HepG2 (cell line): ENCODE measurements at regions of chr3 and their contacts with region 1.

Region 1: DNA sequence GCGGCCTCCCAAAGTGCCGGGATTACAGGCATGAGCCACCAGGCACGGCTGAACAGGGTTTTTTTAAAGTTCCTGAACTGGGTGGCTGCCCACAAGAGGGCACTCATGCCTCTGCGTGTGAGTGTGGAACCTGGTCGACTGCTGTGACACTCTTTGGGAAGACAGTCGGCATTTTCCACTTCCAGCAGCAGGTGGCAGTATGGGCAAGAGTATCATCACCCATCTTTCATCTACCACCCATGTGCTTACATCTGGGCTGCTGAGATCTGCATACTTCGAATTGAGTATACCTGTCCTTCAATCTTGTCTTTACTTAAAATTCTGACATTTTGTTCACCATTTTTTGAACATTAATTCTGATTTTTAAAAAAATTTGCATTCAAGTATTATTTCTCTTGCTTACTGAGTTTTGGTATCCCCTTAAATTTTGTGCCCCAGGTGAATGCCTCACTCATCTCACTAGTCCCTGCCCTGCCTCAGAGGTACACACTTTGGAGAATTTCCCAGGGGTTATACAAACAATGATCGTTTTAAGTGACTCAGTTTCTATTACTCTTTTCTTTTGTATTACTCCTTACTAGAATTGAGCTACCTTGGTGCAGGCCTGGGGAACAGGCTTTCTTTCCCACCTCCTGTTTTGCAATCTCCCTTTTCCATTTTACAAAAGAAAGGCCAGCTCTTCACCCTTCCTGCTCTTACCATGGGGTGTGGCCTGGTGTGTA is 11.8 kb downstream of the CLEC3B start:
- DNase-seq: peak; percentile 91
- ATAC-seq: peak; percentile 96
- H3K4me3 ChIP-seq: no peak overlapping the region
- H3K27ac ChIP-seq: no peak overlapping the region
- H3K4me1 ChIP-seq: no peaks in the 10 kb centered on the region
- H3K27me3 ChIP-seq: peaks cover 0 to 24% of the 10 kb centered on the region in 2 experiments; a peak in 3 of 5 replicates
- CTCF ChIP-seq: peak; percentile 96
- EP300 ChIP-seq: no peak
- POLR2A ChIP-seq: no peak
- RAD21 ChIP-seq: peak; percentile 87

Region 2: GRCh38 chr3:45210308-45211041 is 172.6 kb after region 1 on chr3:
- CTCF ChIA-PET with region 1: interaction called, 42 read pairs
- POLR2A ChIA-PET with region 1: interaction called, 4 read pairs
- in situ Hi-C with region 1: loop called (anchors 5 kb)
- intact Hi-C with region 1: loop called (anchors 1 kb)
- DNase-seq: peak; percentile 41
- ATAC-seq: peak; percentile 99
- H3K4me3 ChIP-seq: peak overlapping the region in 1 of 3 experiments; percentile 26; a peak in 1 of 6 replicates
- H3K27ac ChIP-seq: no peak overlapping the region
- H3K4me1 ChIP-seq: no peaks in the 10 kb centered on the region
- H3K27me3 ChIP-seq: peaks cover 0 to 11% of the 10 kb centered on the region in 2 experiments; a peak in 2 of 5 replicates
- CTCF ChIP-seq: peak; percentile 96
- EP300 ChIP-seq: no peak
- POLR2A ChIP-seq: no peak
- RAD21 ChIP-seq: peak; percentile 94

Region 3: GRCh38 chr3:45333549-45333948 is 295.7 kb after region 1 on chr3:
- CTCF ChIA-PET with region 1: no interaction called
- POLR2A ChIA-PET with region 1: no interaction called
- in situ Hi-C with region 1: no loop called
- intact Hi-C with region 1: no loop called
- DNase-seq: no peak
- ATAC-seq: no peak
- H3K4me3 ChIP-seq: no peak overlapping the region
- H3K27ac ChIP-seq: no peak overlapping the region
- H3K4me1 ChIP-seq: no peaks in the 10 kb centered on the region
- H3K27me3 ChIP-seq: peaks cover 0 to 46% of the 10 kb centered on the region in 2 experiments; a peak in 4 of 5 replicates
- CTCF ChIP-seq: no peak
- EP300 ChIP-seq: no peak
- POLR2A ChIP-seq: no peak
- RAD21 ChIP-seq: no peak

Region 4: DNA sequence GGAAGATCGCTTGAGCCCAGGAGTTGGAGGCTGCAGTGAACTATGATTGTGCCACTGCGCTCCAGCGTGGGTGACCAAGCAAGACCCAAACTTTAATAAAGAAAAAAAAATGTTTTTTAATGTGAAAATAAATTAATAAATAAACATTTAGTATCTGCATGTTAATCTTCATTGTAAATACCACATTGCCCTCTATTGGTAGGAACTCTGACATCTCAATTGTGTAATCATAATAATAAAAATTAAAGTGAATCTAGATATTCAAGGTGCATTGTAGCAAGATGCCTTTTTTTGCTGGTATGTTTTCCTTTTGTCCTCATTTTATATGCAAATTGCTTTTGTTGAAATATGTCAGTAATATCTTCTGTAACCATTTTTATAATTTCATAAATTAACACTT is 461.6 kb after region 1 on chr3:
- CTCF ChIA-PET with region 1: no interaction called
- POLR2A ChIA-PET with region 1: no interaction called
- in situ Hi-C with region 1: loop called (anchors 25 kb)
- intact Hi-C with region 1: no loop called
- DNase-seq: peak; percentile 12
- ATAC-seq: no peak
- H3K4me3 ChIP-seq: no peak overlapping the region
- H3K27ac ChIP-seq: no peak overlapping the region
- H3K4me1 ChIP-seq: no peaks in the 10 kb centered on the region
- H3K27me3 ChIP-seq: no peaks in the 10 kb centered on the region
- CTCF ChIP-seq: no peak
- EP300 ChIP-seq: no peak
- POLR2A ChIP-seq: no peak
- RAD21 ChIP-seq: no peak